Brain microvascular endothelial cell (primary cell): ENCODE measurements at regions of chr17 and their contacts with region 1.

Region 1: DNA sequence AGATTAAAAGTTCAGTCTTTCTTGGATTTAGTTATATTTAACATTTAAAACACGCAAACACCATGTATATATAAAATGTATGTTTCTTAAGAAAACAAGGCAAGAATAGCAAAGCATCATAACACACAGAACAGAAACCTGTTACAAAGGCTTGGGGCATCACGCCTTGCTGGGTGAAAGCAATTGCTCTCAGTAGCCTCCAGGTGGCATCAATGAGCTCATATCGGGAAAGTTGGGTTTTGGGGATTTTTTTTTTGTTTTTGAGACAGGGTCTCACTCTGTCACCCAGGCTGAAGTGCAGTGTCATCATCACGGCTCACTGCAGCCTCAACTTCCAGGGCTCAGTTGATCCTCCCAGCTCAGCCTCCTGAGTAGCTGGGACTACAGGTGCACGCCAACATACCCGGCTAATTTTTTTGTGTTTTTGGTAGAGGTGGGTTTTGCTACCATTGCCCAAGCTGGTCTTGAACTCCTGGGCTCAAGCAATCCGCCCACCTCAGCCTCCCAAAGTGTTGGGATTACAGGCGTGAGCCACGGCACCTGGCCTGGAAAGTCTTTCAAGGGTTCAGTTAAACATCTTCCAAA is 56.9 kb downstream of the CYB5D2 start:
- DNase-seq: no peak
- H3K4me3 ChIP-seq: no peak overlapping the region
- H3K27ac ChIP-seq: no peak overlapping the region
- H3K27me3 ChIP-seq: no peaks in the 10 kb centered on the region
- CTCF ChIP-seq: peak; percentile 86

Region 2: DNA sequence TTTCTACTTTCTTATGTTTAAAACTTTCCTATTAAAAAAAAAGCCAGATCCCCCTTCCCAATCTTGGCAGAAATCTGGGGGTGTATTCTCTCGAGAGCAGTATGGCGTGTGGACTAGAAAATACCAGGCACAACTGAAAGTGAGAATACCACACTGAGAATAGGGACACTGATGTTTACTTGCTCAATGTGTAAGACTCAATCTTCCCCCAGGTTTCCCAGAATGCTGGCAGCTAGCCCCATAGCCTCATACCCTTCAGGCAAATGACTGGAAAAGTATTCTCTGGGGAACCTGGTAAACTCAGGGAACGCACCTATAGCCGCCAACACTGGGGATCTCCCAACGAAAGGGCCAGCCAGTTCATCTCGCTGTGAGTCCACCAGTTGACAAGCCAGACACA is 72.4 kb before region 1 on chr17:
- in situ Hi-C with region 1: no loop called
- DNase-seq: no peak
- H3K4me3 ChIP-seq: no peak overlapping the region
- H3K27ac ChIP-seq: no peak overlapping the region
- H3K27me3 ChIP-seq: no peaks in the 10 kb centered on the region
- CTCF ChIP-seq: no peak

Region 3: DNA sequence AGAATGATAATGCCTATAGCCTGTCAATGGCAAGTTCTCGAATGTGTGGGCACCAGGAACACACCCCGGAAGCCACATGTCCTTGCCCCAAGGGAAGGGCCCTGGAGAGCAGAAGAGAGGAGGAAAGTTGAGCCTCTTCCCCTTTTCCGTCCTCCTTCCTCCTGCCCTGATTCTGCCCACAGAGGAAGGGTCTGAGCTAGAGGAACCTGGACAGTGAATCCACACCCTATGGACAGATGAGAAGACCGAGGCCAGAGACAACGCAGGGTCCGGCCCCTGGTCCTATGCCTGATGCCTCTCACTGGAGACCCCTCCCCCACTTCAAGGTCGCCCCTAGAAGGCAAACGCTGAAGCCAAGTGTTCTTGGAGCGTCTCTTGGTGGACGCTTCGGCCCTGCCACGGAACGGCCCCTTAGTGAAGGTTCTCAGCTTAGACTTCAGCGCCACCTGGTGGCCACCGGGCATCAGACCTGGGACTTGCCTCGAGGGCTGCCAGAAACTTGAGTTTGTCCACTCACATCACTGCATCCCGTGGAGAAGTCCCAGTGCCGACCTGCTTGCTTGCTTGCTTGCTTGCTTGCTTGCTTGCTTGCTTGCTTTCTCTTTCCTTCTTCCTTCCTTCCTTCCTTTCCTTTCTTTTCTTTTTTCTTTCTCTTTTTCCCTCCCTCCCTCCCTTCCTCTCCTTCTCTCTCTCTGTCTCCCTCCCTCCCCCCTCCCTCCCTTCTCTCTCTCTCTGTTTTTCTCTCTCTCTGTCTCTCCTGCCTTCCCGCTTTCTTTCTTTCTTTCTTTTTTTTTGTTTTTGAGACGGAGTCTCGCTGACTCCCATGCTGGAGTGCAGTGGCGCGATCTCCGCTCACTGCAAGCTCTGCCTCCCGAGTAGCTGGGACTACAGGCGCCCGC is 213.3 kb after region 1 on chr17:
- in situ Hi-C with region 1: loop called (anchors 25 kb)
- DNase-seq: peak; percentile 81
- H3K4me3 ChIP-seq: no peak overlapping the region
- H3K27ac ChIP-seq: no peak overlapping the region
- H3K27me3 ChIP-seq: no peaks in the 10 kb centered on the region
- CTCF ChIP-seq: peak; percentile 92